Heart left ventricle (tissue), 16 donors: ENCODE measurements at regions of chr16 and their contacts with region 1.

Region 1: DNA sequence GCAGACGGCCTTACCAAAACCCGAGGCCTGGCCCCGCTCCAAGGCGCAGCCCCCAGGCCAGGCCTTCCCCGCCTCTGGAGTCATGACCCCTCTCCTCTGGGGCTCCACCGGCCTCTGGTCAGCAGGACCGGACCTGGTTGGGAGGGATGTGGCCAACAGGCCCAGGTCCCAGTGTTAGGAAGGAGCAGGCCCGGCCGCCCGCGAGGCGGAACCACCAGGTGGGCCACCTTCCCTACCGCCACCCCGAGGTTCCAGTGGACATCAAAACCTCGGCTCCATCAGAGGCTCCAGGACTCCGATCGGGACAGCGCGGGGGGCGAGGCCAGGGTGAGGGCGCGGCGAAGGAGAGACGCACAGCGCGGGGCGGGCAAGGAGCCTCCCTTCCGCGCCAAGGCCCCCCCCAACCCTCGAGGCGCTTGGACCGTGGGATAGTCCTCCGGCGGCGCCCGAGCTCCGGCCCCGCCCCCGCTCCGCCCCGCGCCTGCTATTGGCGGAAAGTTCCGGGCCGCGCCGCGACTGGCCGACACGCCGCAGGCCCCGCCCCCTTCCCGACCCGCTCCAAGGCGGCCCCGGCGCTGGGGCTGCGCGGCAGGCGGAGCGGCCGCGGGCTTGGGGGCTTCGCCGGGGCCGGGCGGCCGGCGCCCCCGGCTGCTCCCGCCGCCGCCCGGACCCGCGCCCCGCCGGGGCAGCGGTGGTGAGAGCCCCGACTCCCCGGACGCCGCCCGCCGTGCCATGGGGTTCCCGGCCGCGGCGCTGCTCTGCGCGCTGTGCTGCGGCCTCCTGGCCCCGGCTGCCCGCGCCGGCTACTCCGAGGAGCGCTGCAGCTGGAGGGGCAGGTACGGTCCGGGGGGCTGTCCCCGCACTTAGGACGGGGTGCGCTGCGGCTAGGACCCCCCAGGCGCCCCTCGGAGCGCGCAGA is at the start of gene METRN:
- DNase-seq: peak; percentile 94 to 96 (median 95)
- ATAC-seq: peak; percentile 69 to 90 (median 85)
- H3K4me3 ChIP-seq: peak within 1 kb of the TSS; percentile 62 to 93 (median 74)
- H3K27ac ChIP-seq: peak within 1 kb of the TSS in 9 of 12 donors; percentile 18 to 58 (median 37)
- H3K4me1 ChIP-seq: peaks cover 0 to 52% (median 28%) of the 10 kb centered on the region in 12 donors
- H3K27me3 ChIP-seq: peaks cover 6 to 34% (median 17%) of the 10 kb centered on the region in 9 donors
- CTCF ChIP-seq: no peak
- POLR2A ChIP-seq: peak in 1 of 2 donors; percentile 42
- total RNA-seq, gene METRN: 50.5 to 79.4 (median 60.7) TPM

Region 2: GRCh38 chr16:740764-741505 is 26.1 kb after region 1 on chr16 and contains the start of gene CIAO3:
- intact Hi-C with region 1: loop called in 5 of 10 experiments (anchors 1 to 5 kb)
- DNase-seq: peak; percentile 89 to 96 (median 92)
- ATAC-seq: peak; percentile 61 to 95 (median 94)
- H3K4me3 ChIP-seq: peak within 1 kb of the TSS; percentile 76 to 100 (median 97)
- H3K27ac ChIP-seq: peak within 1 kb of the TSS in 10 of 12 donors; percentile 74 to 90 (median 80)
- H3K4me1 ChIP-seq: peaks cover 4 to 18% (median 12%) of the 10 kb centered on the region in 12 donors
- H3K27me3 ChIP-seq: peaks cover 0 to 27% (median 0%) of the 10 kb centered on the region in 9 donors
- CTCF ChIP-seq: peak; percentile 90 to 100 (median 95)
- POLR2A ChIP-seq: peak; percentile 10 to 75
- total RNA-seq, gene CIAO3: 21.4 to 33.1 (median 26.8) TPM

Region 3: GRCh38 chr16:788394-789126 is 73.7 kb after region 1 on chr16 and contains the start of gene CHTF18:
- intact Hi-C with region 1: loop called (anchors 1 to 2 kb)
- DNase-seq: peak; percentile 92 to 95 (median 93)
- ATAC-seq: peak; percentile 89 to 96 (median 92)
- H3K4me3 ChIP-seq: peak within 1 kb of the TSS; percentile 72 to 100 (median 94)
- H3K27ac ChIP-seq: peak within 1 kb of the TSS in 11 of 12 donors; percentile 52 to 87 (median 74)
- H3K4me1 ChIP-seq: peaks cover 0 to 36% (median 17%) of the 10 kb centered on the region in 12 donors
- H3K27me3 ChIP-seq: no peaks in the 10 kb centered on the region
- CTCF ChIP-seq: no peak
- POLR2A ChIP-seq: no peak
- total RNA-seq, gene CHTF18: 0.83 to 15.0 (median 4.0) TPM

Region 4: GRCh38 chr16:852451-853185 is 137.8 kb after region 1 on chr16:
- intact Hi-C with region 1: no loop called
- DNase-seq: peak in 3 of 5 donors; percentile 14 to 46 (median 20)
- ATAC-seq: peak in 1 of 4 donors; percentile 4
- H3K4me3 ChIP-seq: no peak overlapping the region
- H3K27ac ChIP-seq: no peak overlapping the region
- H3K4me1 ChIP-seq: no peaks in the 10 kb centered on the region
- H3K27me3 ChIP-seq: no peaks in the 10 kb centered on the region
- CTCF ChIP-seq: no peak
- POLR2A ChIP-seq: no peak

Region 5: DNA sequence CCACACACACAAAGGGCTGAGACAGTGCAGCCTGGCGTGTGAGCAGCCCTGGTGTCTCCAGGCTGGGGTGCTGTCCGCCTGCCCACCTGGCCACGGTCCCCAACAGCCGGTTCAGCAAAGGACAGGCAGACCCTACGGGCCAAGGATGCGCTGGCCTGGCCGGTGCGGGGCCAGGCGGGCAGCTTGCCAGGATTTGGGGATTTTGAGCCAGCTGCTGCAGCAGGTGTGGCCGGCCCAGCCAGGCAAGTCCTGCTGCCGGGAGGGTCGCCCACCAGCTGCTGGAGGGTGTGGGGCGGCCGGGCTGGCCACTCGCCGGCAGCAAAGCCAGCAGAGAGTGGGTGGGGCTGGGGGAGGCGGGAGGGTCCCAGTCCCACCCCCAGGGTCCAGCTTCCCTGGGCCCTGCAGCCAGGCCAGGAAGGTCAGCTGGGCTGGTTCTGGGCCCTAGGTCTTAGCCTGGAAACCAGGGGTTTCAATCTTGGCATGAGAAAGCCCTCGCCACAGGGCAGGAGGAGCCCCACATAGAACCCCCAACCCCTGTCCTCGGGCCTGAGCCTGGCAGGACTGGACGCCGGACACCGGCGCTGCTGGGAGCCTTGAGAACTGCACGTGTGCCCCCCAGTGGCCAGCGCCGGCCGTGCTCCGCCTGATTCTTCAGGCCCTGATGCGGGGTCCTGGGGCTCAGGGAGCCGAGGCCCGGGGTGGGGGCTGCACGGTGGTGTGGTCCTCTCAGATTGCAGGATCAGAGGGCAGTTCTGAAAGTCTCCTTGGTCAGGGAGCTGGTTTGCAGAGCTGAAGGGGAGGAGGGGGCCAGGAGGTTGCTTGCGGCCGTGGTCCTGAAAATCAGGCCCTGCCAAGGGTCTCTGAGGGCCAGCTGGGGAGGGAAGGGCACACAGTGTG is 340.1 kb after region 1 on chr16:
- intact Hi-C with region 1: loop called in 7 of 10 experiments (anchors 1 to 5 kb)
- DNase-seq: peak in 4 of 5 donors; percentile 51 to 75 (median 56)
- ATAC-seq: peak; percentile 30 to 83 (median 72)
- H3K4me3 ChIP-seq: no peak overlapping the region
- H3K27ac ChIP-seq: no peak overlapping the region
- H3K4me1 ChIP-seq: peaks cover 0 to 6% (median 0%) of the 10 kb centered on the region in 12 donors
- H3K27me3 ChIP-seq: peaks cover 0 to 42% (median 7%) of the 10 kb centered on the region in 9 donors
- CTCF ChIP-seq: peak; percentile 65 to 86 (median 80)
- POLR2A ChIP-seq: no peak

Region 6: GRCh38 chr16:1105888-1106620 is 391.2 kb after region 1 on chr16:
- intact Hi-C with region 1: loop called in 1 of 10 experiments (anchors 1 kb)
- DNase-seq: peak; percentile 50 to 80 (median 67)
- ATAC-seq: peak; percentile 60 to 83 (median 75)
- H3K4me3 ChIP-seq: no peak overlapping the region
- H3K27ac ChIP-seq: no peak overlapping the region
- H3K4me1 ChIP-seq: peaks cover 0 to 8% (median 5%) of the 10 kb centered on the region in 12 donors
- H3K27me3 ChIP-seq: peaks cover 13 to 75% (median 30%) of the 10 kb centered on the region in 9 donors
- CTCF ChIP-seq: peak; percentile 49 to 88 (median 70)
- POLR2A ChIP-seq: no peak